AG04449 (cell line): ENCODE measurements at regions of chr6 and their contacts with region 1.

Region 1: DNA sequence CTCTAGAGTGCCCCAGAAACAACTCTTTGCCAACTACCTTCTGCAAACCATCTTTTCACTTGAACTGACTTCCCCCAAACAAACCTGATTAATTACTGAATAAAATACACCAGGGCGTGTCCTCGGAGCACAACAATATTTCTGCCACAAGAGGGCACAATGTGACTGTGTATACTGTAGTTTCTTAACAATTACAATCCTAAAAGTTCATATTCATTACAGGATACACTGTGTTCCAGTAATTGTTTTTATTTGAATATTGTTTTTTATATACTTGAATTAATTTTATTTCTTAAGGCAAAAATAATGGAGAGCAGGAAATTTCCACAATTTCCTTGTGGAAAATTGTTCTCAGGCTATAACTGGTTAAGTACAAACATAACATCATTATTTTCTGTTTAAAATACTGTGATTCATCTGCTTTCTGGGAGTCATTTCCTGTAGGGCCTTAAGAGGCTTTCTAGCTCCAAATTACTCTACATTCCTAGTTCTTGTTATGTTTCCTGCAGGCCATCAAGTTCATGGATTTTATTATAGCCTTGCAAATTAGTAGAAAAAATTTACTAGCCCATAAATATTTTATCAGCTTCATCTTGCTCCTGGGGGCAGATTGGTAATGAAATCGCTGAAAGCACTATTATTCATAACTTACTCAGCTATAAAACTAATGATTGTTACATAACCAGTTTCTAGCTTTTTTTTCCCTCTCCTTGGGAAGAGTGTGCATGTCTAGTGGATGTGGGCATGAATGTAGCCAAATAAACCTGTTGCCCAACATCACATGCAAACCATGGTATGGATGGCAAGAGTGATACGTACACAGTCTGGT is 51.9 kb upstream of the SLC22A16 start:
- DNase-seq: peak; percentile 79
- H3K4me3 ChIP-seq: no peak overlapping the region
- CTCF ChIP-seq: peak; percentile 48

Region 2: DNA sequence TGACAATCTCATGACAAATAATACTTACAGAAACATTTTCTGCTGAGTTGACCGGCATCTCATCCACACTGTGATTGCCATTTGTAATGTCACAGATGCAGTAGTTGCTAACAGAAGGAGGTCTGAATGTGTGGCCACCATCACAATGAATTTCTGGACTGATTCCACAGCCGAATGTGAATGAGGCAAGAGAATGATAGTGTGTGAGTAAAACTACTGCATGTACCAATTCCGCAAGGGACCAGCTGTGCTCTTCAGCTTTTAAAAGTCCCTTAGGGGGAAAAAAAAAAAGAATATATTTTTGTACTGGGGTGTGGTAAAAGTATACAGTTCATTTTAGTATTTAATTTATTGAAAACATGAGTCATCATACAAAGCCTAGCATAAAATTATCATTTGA is 1529.8 kb before region 1 on chr6:
- CTCF ChIA-PET with region 1: no interaction called
- POLR2A ChIA-PET with region 1: no interaction called
- DNase-seq: no peak
- H3K4me3 ChIP-seq: no peak overlapping the region
- CTCF ChIP-seq: no peak

Region 3: GRCh38 chr6:110322874-110323242 is 205.5 kb before region 1 on chr6:
- CTCF ChIA-PET with region 1: no interaction called
- POLR2A ChIA-PET with region 1: no interaction called
- DNase-seq: no peak
- H3K4me3 ChIP-seq: no peak overlapping the region
- CTCF ChIP-seq: no peak

Region 4: DNA sequence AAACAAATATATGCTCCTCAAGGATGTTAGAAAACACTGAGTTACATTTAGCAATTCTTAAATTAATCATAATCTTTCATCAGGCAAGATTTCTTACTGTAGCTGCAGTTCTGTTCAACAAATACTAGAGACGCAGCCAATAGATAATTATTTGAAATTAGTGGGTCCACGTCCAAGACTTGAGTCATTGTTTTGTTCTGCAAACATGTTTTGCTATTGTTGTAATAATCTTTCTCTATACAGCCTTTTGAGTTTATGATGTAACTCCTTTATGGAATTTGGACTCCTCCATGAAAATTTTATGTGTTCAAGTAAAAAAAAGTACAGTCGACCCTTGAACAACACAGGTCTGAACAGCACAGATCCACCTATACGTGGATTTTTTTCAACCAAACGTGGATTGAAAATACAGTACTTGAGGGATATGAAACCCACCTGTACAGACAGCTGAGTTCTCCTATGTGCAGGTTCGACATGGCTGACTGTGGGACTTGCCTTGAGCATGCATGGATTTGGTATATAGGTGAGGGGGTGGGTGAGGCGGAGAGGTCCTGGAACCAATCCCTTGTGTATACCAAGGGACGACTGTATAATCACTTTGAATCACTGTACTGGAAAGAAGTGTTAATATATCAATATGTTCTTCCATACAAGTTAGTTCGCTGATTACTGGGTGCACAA is 10.6 kb before region 1 on chr6:
- CTCF ChIA-PET with region 1: interaction called, 11 read pairs
- POLR2A ChIA-PET with region 1: no interaction called
- DNase-seq: no peak
- H3K4me3 ChIP-seq: no peak overlapping the region
- CTCF ChIP-seq: no peak

Region 5: GRCh38 chr6:110949679-110950285 is 421.5 kb after region 1 on chr6:
- CTCF ChIA-PET with region 1: interaction called, 52 read pairs
- POLR2A ChIA-PET with region 1: no interaction called
- DNase-seq: no peak
- H3K4me3 ChIP-seq: no peak overlapping the region
- CTCF ChIP-seq: peak; percentile 0

Region 6: DNA sequence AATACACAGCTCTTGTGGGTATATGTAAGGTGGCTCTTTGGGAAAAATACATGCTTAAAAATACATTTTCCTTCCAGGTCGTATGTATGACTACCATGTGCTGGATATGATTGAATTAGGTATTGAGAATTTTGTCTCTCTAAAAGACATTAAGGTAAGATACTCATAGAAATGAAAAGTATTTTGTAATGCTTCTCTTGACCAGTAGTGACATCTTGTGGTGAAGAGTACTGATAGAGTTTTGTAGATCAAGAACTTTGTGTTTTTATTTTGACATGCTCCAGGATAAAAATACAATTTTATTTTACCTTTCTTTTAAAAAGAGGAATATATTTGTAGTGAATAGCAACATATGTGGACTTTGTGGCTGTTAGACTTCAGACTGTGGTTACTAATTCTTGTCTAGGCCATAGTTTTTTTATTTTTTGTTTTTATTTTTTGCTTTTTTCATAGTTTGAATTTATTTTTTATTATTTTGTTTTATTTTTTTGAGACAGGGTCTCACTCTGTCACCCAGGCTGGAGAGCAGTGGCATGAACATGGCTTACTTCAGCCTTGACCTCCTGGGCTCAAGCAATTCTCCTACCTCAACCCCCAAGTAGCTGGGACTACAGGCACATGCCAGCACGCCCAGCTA is 471.4 kb after region 1 on chr6:
- CTCF ChIA-PET with region 1: interaction called, 23 read pairs
- POLR2A ChIA-PET with region 1: no interaction called
- DNase-seq: no peak
- H3K4me3 ChIP-seq: no peak overlapping the region
- CTCF ChIP-seq: no peak